ENCODE measurements at regions of chr15 and their contacts with region 1.

Region 1: GRCh38 chr15:38563723-38564519 is 693 bp downstream of the RASGRP1 start:
- DNase-seq: peak; percentile 82
- H3K4me3 Mint-ChIP-seq: peak overlapping the region; percentile 97
- H3K27ac Mint-ChIP-seq: peak overlapping the region; percentile 98
- H3K4me1 Mint-ChIP-seq: peaks cover 58% of the 10 kb centered on the region
- H3K27me3 Mint-ChIP-seq: no peaks in the 10 kb centered on the region

Region 2: GRCh38 chr15:38440353-38441129 is 123.4 kb before region 1 on chr15:
- intact Hi-C with region 1: loop called (anchors 1 kb)
- DNase-seq: peak; percentile 31
- H3K4me3 Mint-ChIP-seq: no peak overlapping the region
- H3K27ac Mint-ChIP-seq: peak overlapping the region; percentile 2
- H3K4me1 Mint-ChIP-seq: peaks cover 8% of the 10 kb centered on the region
- H3K27me3 Mint-ChIP-seq: peaks cover 47% of the 10 kb centered on the region

Region 3: GRCh38 chr15:38486936-38487335 is 77.0 kb before region 1 on chr15:
- intact Hi-C with region 1: loop called (anchors 2 kb)
- DNase-seq: no peak
- H3K4me3 Mint-ChIP-seq: no peak overlapping the region
- H3K27ac Mint-ChIP-seq: peak overlapping the region; percentile 88
- H3K4me1 Mint-ChIP-seq: peaks cover 38% of the 10 kb centered on the region
- H3K27me3 Mint-ChIP-seq: no peaks in the 10 kb centered on the region

Region 4: DNA sequence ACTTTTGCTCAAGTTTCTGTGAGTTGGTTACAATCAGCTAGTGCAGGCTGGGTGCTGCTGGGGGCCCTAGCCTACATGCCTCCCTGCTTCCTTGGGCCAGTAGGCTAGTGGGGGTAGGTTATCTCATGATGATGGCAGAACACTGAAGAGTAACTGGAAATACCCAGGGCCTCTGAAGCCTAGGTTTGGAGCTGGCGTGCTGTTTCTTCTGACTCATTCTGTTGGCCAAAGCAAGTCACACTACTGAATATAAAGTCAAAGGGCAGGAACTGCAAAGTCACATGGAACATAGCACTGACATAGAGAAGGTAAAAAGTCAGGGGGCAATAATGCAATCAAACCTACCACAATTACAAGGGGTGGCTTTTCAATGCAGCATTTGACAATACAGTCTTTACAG is 33.8 kb before region 1 on chr15:
- intact Hi-C with region 1: loop called (anchors 1 kb)
- DNase-seq: no peak
- H3K4me3 Mint-ChIP-seq: peak overlapping the region; percentile 23
- H3K27ac Mint-ChIP-seq: peak overlapping the region; percentile 82
- H3K4me1 Mint-ChIP-seq: peaks cover 86% of the 10 kb centered on the region
- H3K27me3 Mint-ChIP-seq: no peaks in the 10 kb centered on the region

Region 5: DNA sequence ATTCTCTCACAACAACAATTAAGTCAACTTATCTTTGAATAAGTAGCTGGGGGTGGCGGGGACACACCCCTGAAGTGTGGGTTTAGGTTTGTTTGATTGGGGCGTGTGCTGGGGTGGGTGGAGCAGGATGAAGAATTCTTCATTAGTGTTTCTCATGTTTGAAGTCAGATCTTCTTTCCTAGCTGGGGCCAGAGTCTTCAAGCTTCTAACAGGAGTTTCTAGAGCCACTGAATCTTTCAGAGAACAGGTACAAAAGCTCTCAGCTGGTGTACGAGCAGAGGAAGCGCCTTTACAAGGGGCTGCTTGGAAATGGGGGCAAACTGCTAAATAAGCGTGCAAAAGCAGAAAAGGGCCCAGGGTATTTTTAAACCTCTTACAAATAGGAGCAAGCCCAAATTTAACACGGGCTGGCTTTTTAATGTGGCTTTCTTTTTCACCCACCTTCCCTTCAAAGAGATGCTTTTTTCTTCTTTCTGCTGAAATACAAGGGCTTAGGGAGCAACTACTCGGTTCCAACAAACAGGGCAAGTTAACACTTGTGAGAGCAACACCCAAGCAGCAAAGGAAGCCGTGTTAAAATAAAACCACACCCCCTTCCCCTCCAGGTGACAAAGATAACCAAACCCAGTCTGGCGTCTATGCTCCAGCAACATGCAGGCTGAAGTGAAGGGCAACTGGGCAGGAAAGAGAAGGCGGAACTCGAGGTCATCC is 87.6 kb after region 1 on chr15:
- intact Hi-C with region 1: loop called (anchors 1 kb)
- DNase-seq: peak; percentile 56
- H3K4me3 Mint-ChIP-seq: peak overlapping the region; percentile 75
- H3K27ac Mint-ChIP-seq: peak overlapping the region; percentile 96
- H3K4me1 Mint-ChIP-seq: peaks cover 77% of the 10 kb centered on the region
- H3K27me3 Mint-ChIP-seq: no peaks in the 10 kb centered on the region

Region 6: DNA sequence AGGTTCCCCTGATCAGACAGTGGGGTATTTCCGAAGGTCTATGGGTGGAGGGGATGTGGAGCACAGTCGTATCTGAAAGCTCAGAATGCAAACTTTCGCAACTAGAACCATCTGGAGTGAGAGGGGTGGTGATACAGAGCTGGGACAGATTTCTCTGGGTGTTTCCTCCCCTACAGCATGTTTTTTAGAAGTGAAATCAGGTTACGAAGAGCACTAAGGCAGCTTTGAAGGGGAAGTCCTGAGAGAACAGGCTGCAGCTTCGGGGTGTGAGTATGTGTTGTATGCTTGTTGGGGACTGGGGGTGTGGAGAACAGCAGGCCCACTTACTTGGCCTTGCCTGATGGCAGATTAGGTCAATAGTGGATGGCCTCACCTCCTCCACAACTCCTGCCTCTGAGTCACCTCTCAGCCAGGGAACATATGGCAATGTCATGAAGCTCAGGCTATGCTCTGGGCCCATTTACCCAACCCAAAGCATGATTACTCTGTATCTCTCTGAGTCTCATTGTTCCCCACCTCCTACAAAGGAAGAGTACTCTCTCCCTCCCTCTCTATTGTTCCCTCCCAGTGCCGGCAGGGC is 107.8 kb after region 1 on chr15:
- intact Hi-C with region 1: loop called (anchors 1 kb)
- DNase-seq: peak; percentile 41
- H3K4me3 Mint-ChIP-seq: peak overlapping the region; percentile 68
- H3K27ac Mint-ChIP-seq: peak overlapping the region; percentile 98
- H3K4me1 Mint-ChIP-seq: peaks cover 66% of the 10 kb centered on the region
- H3K27me3 Mint-ChIP-seq: no peaks in the 10 kb centered on the region

Region 7: DNA sequence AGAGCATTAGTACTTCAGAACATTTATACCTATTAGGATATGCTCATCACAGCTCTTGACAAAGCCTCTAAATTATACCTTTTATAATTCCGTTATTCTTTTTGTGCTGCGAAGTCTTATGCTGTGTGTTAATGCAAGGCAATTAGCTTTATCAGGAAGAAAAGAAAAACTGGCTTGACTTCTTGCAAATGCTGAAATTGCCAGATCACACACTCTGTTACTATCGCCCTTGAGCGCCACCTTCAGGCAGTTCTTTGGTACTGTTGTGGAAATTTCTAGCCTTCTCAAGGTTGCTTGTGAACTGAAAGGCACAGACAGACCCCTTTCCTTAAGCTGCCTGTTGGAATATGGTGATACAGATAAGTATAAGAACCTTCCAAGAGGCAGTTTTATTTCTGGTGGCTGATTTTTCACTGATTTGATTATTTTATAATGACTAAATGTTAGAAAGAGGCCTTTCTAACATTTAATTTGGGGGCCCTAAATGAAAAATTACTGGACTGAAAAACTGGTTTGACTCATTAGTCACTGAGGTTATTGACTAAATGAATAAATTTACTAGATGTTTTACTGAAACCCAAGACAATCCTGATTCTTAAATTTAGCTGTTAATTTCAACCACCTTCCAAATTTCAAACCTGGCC is 126.9 kb after region 1 on chr15:
- intact Hi-C with region 1: loop called (anchors 1 kb)
- DNase-seq: peak; percentile 75
- H3K4me3 Mint-ChIP-seq: no peak overlapping the region
- H3K27ac Mint-ChIP-seq: peak overlapping the region; percentile 29
- H3K4me1 Mint-ChIP-seq: peaks cover 77% of the 10 kb centered on the region
- H3K27me3 Mint-ChIP-seq: no peaks in the 10 kb centered on the region